ENCODE measurements at regions of chr4 and their contacts with region 1.

Region 1: DNA sequence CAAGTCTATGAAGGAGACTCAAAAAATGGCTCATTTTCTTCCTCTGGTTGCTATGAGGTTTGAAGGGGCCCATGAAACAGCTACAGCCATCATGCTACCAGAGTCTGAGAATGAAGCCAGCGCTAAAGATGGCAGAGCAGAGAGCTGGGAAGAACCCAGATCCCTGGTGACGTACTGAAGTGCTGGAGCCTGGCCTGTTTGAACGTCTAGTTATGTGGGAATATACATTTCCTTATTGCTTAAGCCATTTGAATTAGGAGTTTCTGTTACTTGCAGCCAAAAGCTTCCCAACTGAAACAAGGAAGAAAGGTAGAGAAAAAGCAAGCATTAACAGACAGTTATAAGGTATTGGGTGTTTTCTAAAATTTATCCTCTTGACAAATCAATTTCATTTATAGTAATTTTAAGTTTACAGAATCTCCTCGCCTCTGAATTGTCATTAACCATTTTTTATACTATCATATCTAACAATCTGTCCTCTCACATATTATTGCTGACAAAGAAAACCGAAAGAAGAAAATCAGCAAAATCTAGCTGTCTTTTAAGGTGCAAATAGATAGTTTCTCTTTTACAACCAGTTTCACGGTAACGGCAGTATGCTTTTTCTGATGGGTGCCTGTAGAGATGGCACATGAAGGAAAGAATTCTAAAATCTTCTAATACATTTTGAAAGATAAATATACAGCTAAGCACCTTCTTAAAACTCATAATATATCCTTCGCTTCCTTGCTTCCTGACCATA is 8.9 kb upstream of the COQ2 start:
- DNase-seq: no peak
- ATAC-seq: no peak
- H3K4me3 ChIP-seq: no peak overlapping the region
- H3K4me3 Mint-ChIP-seq: no peak overlapping the region
- H3K27ac ChIP-seq: peak overlapping the region in 1 of 2 donors; percentile 32
- H3K27ac Mint-ChIP-seq: no peak overlapping the region
- H3K4me1 ChIP-seq: peaks cover 5% of the 10 kb centered on the region
- H3K4me1 Mint-ChIP-seq: peaks cover 11% of the 10 kb centered on the region
- H3K27me3 ChIP-seq: no peaks in the 10 kb centered on the region
- H3K27me3 Mint-ChIP-seq: no peaks in the 10 kb centered on the region
- CTCF ChIP-seq: no peak

Region 2: DNA sequence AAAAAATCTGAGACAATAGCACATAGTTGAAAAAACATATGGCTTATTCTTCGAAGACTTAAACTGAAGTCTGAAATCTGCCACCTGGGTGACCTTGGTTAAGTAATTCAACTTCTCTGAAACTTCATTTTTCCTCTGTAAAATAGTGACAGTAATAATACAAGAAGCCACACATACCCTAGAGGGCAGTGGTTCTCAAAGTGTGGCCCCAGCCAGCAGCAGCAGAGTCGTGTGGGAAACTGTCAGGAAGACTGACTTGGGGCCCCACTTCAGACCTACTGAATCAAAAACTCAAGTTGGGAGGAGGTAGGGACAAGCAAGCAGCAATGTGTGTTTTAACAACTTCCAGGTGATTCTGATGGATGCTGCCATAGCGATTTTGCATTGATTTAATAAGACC is 1169.5 kb before region 1 on chr4:
- CTCF ChIA-PET with region 1: no interaction called
- POLR2A ChIA-PET with region 1: no interaction called
- intact Hi-C with region 1: no loop called
- DNase-seq: peak in 7 of 14 experiments; percentile 6 to 60 (median 41)
- ATAC-seq: peak; percentile 70
- H3K4me3 ChIP-seq: no peak overlapping the region
- H3K4me3 Mint-ChIP-seq: no peak overlapping the region
- H3K27ac ChIP-seq: no peak overlapping the region
- H3K27ac Mint-ChIP-seq: no peak overlapping the region
- H3K4me1 ChIP-seq: peaks cover 6% of the 10 kb centered on the region
- H3K4me1 Mint-ChIP-seq: peaks cover 16% of the 10 kb centered on the region
- H3K27me3 ChIP-seq: no peaks in the 10 kb centered on the region
- H3K27me3 Mint-ChIP-seq: no peaks in the 10 kb centered on the region
- CTCF ChIP-seq: peak; percentile 65

Region 3: GRCh38 chr4:83272900-83273299 is 20.6 kb before region 1 on chr4:
- CTCF ChIA-PET with region 1: no interaction called
- POLR2A ChIA-PET with region 1: no interaction called
- intact Hi-C with region 1: loop called in 1 of 2 experiments (anchors 1 kb)
- DNase-seq: no peak
- ATAC-seq: no peak
- H3K4me3 ChIP-seq: no peak overlapping the region
- H3K4me3 Mint-ChIP-seq: no peak overlapping the region
- H3K27ac ChIP-seq: no peak overlapping the region
- H3K27ac Mint-ChIP-seq: no peak overlapping the region
- H3K4me1 ChIP-seq: no peaks in the 10 kb centered on the region
- H3K4me1 Mint-ChIP-seq: peaks cover 8% of the 10 kb centered on the region
- H3K27me3 ChIP-seq: no peaks in the 10 kb centered on the region
- H3K27me3 Mint-ChIP-seq: no peaks in the 10 kb centered on the region
- CTCF ChIP-seq: no peak